Activated naive CD4-positive, alpha-beta T cell treated with anti-CD3 and anti-CD28 coated beads for 36 hours (primary cell): ENCODE measurements at regions of chr1 and their contacts with region 1.

Region 1: GRCh38 chr1:167191953-167192352 is 28.7 kb upstream of the POU2F1 start:
- DNase-seq: no peak
- H3K4me3 Mint-ChIP-seq: no peak overlapping the region
- H3K27ac Mint-ChIP-seq: no peak overlapping the region
- H3K4me1 Mint-ChIP-seq: no peaks in the 10 kb centered on the region
- H3K27me3 Mint-ChIP-seq: no peaks in the 10 kb centered on the region

Region 2: DNA sequence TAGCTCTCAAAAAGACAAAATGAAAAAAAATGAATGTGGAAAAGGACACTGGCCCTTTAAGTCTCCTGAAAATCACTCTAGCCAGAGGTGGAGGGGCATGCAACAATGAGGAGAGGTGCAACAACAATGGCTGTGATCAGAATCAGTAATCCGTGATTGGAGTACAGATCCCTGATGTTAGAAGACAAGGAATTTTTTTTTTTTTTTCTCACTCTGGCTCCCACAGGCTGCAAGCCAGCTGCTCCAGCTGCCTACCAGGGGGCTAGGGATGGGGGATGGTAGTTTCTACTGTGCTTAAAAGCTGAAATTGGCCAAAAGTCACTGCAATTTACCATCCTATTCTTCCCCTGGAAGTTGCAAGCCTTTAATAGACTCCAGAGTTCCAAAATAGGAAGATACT is 43.5 kb before region 1 on chr1:
- CTCF ChIA-PET with region 1: no interaction called
- intact Hi-C with region 1: loop called (anchors 5 kb)
- DNase-seq: no peak
- H3K4me3 Mint-ChIP-seq: no peak overlapping the region
- H3K27ac Mint-ChIP-seq: no peak overlapping the region
- H3K4me1 Mint-ChIP-seq: no peaks in the 10 kb centered on the region
- H3K27me3 Mint-ChIP-seq: peaks cover 13% of the 10 kb centered on the region

Region 3: GRCh38 chr1:167210966-167211674 is 19.2 kb after region 1 on chr1:
- CTCF ChIA-PET with region 1: no interaction called
- intact Hi-C with region 1: no loop called
- DNase-seq: no peak
- H3K4me3 Mint-ChIP-seq: no peak overlapping the region
- H3K27ac Mint-ChIP-seq: no peak overlapping the region
- H3K4me1 Mint-ChIP-seq: peaks cover 9% of the 10 kb centered on the region
- H3K27me3 Mint-ChIP-seq: no peaks in the 10 kb centered on the region